ENCODE measurements at regions of chr3 and their contacts with region 1.

Region 1: GRCh38 chr3:150286390-150287147 is 121.5 kb upstream of the TSC22D2 start:
- DNase-seq: peak in 1 of 2 experiments; percentile 51
- H3K4me3 ChIP-seq: no peak overlapping the region
- H3K4me3 Mint-ChIP-seq: no peak overlapping the region
- H3K27ac Mint-ChIP-seq: peak overlapping the region; percentile 77
- H3K4me1 ChIP-seq: peaks cover 12% of the 10 kb centered on the region
- H3K4me1 Mint-ChIP-seq: no peaks in the 10 kb centered on the region
- H3K27me3 ChIP-seq: no peaks in the 10 kb centered on the region
- H3K27me3 Mint-ChIP-seq: no peaks in the 10 kb centered on the region
- CTCF ChIP-seq: peak; percentile 57 to 71

Region 2: GRCh38 chr3:150062492-150062891 is 224.1 kb before region 1 on chr3:
- CTCF ChIA-PET with region 1: no interaction called
- POLR2A ChIA-PET with region 1: no interaction called
- intact Hi-C with region 1: no loop called
- DNase-seq: no peak
- H3K4me3 ChIP-seq: no peak overlapping the region
- H3K4me3 Mint-ChIP-seq: no peak overlapping the region
- H3K27ac Mint-ChIP-seq: no peak overlapping the region
- H3K4me1 ChIP-seq: no peaks in the 10 kb centered on the region
- H3K4me1 Mint-ChIP-seq: no peaks in the 10 kb centered on the region
- H3K27me3 ChIP-seq: no peaks in the 10 kb centered on the region
- H3K27me3 Mint-ChIP-seq: peaks cover 10% of the 10 kb centered on the region
- CTCF ChIP-seq: no peak

Region 3: GRCh38 chr3:150314248-150315004 is 27.9 kb after region 1 on chr3:
- CTCF ChIA-PET with region 1: no interaction called
- POLR2A ChIA-PET with region 1: no interaction called
- intact Hi-C with region 1: loop called (anchors 2 kb)
- DNase-seq: peak; percentile 58 to 73
- H3K4me3 ChIP-seq: no peak overlapping the region
- H3K4me3 Mint-ChIP-seq: no peak overlapping the region
- H3K27ac Mint-ChIP-seq: no peak overlapping the region
- H3K4me1 ChIP-seq: peaks cover 33% of the 10 kb centered on the region
- H3K4me1 Mint-ChIP-seq: peaks cover 31% of the 10 kb centered on the region
- H3K27me3 ChIP-seq: no peaks in the 10 kb centered on the region
- H3K27me3 Mint-ChIP-seq: no peaks in the 10 kb centered on the region
- CTCF ChIP-seq: no peak